Motor neuron (in vitro differentiated cells): ENCODE measurements at regions of chr1 and their contacts with region 1.

Region 1: DNA sequence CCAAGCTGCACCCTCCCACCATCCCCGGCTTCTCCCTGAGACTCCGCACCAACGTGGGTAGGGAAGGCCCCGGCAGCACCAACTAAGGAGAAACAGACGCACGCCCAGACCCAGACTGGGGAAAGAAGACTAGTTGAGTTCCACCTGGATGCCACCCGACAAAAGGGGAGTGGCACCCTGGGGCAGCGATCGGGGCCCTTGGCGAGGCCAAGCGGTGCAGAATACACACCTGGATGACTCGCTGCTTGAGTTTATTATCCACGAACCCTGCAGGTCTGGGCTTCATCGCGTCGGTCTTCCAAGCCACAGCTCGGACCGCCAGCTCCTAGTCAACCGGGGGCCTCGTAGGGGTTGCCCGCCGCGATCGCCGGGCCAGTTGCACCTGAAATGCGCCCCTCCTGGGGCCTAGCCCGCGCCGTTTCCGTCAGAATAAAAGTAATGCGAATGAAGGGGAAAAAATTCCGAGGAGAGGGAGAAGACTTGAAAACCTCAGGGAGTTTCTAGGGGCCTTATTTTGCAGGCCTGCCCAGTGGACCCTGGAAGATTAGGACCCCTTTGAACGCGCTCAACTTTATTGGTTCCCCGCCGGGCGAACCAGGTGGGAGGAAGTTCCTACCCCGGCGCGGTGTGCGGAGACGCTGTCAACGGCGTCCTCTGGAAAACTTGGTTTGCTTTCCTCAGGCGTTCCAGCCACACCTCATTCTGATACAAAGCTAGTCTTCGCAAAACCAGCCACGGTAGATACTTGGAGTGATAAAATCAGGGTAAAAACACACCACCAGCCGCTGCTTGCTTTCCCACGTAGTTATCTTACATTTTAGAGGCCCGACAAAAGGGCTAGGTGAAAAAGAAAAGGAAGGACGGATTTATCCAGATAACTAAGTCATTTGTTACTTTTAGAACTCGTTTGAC is at the start of gene NVL:
- ATAC-seq: peak; percentile 86 to 94 (median 93)
- H3K4me3 ChIP-seq: peak within 1 kb of the TSS; percentile 53 to 98 (median 83)
- H3K27ac ChIP-seq: peak within 1 kb of the TSS; percentile 99
- H3K4me1 ChIP-seq: peaks cover 9 to 16% of the 10 kb centered on the region in 2 donors
- total RNA-seq, gene NVL: 21.8 to 70.9 (median 47.7) TPM

Region 2: DNA sequence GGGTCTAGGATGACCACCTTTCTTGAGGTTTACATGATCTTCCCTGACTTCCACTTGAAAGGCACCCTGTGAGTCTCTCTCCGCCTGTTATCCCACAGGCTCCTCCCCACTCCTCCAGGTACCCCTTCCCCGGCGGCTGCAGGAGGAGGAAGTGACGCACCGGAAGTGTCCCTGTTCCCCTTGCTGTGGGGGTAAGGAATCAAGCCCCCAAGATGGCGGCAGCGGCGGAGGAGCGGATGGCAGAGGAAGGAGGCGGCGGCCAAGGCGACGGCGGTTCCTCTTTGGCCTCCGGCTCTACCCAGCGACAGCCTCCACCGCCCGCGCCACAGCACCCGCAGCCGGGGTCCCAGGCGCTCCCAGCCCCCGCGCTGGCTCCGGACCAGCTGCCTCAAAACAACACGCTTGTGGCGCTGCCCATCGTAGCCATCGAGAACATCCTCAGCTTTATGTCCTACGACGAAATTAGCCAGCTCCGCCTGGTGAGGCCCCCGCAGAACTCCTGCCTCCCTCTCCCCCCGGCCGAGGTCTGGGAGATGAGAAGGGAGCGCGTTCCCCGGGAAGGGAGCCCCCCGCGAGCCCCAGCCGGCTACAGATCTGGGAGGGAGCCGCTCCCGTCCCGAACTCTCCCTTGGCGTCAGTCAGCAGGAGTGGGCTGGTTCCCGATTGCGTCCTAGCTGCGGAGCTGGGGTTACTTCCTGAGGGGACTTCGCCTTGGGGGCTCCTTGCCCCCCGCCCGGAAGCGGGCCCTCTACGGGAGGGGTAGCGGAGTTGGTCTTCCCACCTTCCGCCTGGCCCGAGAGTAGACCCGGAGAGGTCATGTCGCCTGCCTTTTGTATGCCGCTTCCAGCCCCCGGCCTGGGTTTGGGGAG is 215.9 kb before region 1 on chr1 and contains the start of gene FBXO28:
- in situ Hi-C with region 1: loop called in 2 of 9 experiments (anchors 25 kb)
- ATAC-seq: peak; percentile 98 to 100 (median 100)
- H3K4me3 ChIP-seq: peak within 1 kb of the TSS; percentile 89 to 100 (median 98)
- H3K27ac ChIP-seq: peak within 1 kb of the TSS; percentile 94
- H3K4me1 ChIP-seq: peaks cover 9 to 19% of the 10 kb centered on the region in 2 donors
- total RNA-seq, gene FBXO28: 18.7 to 37.6 (median 25.1) TPM

Region 3: DNA sequence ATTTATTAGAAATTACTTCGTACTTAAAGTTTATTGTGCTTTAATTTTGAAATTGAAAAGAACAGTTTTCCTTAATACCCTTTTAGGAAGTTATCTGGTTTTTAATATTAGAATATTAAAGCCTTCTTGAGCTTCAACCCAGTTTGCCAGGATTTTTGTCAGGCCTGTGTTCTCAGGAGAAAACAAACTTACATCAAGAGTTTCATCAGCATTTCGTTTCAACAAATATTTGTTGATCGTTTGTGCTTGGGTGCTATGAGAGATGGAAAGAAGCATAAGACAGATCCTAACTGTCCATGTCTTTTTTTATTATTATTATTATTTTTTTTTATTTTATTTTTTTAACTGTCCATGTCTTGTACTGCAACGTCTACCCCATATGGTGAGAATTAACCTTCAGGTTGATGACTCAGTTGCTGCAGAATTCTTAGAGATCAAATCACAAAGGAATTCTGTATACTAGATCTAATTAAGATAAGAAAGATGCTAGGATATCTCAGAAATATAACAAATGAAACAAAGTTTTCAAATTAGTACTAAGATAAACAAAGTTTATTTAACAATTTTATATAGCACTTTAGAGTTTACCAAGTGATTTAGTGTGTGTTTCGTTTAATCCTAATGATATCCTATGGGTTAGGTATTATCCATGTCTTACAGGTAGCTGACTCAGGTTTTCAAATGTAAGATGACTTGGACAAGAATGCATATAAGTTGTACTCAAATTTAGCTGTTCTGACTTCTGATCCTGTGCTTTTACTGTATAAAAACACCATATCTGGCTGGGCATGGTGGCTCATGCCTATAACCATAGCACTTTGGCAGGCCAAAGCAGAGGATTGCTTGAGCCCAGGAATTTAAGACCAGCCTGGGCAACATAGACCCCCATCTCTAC is 201.9 kb before region 1 on chr1:
- in situ Hi-C with region 1: loop called in 3 of 9 experiments (anchors 25 kb)
- ATAC-seq: no peak
- H3K4me3 ChIP-seq: no peak overlapping the region
- H3K27ac ChIP-seq: no peak overlapping the region
- H3K4me1 ChIP-seq: no peaks in the 10 kb centered on the region

Region 4: GRCh38 chr1:224183591-224184312 is 146.3 kb before region 1 on chr1:
- in situ Hi-C with region 1: no loop called
- ATAC-seq: peak; percentile 70 to 77 (median 72)
- H3K4me3 ChIP-seq: peak overlapping the region; percentile 67 to 93 (median 84)
- H3K27ac ChIP-seq: peak overlapping the region; percentile 84 to 93
- H3K4me1 ChIP-seq: peaks cover 13 to 16% of the 10 kb centered on the region in 2 donors